Naive thymus-derived CD4-positive, alpha-beta T cell (primary cell): ENCODE measurements at regions of chr19 and their contacts with region 1.

Region 1: DNA sequence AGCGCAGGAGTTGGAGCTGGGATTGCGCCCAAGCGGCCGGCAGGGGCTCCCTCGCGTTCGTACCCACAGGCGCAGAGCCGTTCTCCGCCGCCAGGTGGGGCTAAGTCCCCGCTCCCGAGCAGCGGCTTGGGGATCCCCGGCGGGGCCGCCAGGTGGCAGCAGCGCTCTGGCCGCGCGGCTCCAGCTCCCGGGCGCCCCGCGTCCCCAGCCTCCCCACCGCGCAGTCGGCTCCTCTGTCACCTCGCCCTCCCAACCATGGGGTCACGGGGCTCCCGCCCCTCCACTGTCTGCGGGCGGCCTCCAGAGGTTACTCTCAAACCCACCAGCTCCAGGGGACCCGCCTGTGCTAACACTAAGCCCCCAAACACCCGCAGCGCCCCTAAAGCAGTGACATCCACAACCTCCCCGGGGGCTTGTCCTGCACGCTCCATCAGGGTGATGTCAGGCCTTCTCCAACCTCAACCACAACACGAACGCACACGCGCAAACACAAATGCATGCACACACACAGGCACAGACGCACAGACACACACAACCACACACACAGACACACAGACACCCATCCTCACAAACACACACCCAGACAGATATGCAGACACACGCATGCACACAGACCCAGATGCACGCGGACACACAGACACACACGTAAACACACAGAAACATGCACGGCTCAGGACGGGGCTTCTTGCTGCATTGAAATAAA is 18.4 kb upstream of the KCTD15 start:
- DNase-seq: peak; percentile 60 to 94 (median 84)
- ATAC-seq: peak; percentile 96
- H3K4me3 ChIP-seq: peak overlapping the region; percentile 40
- H3K4me3 Mint-ChIP-seq: peak overlapping the region in 8 of 10 donors; percentile 1 to 71 (median 55)
- H3K27ac ChIP-seq: no peak overlapping the region
- H3K27ac Mint-ChIP-seq: peak overlapping the region in 1 of 9 donors; percentile 22
- H3K4me1 ChIP-seq: peaks cover 0 to 3% of the 10 kb centered on the region in 2 donors
- H3K4me1 Mint-ChIP-seq: peaks cover 5 to 13% (median 10%) of the 10 kb centered on the region in 7 donors
- H3K27me3 ChIP-seq: no peaks in the 10 kb centered on the region
- H3K27me3 Mint-ChIP-seq: peaks cover 14 to 37% (median 27%) of the 10 kb centered on the region in 5 donors

Region 2: GRCh38 chr19:33430674-33431277 is 347.5 kb before region 1 on chr19:
- CTCF ChIA-PET with region 1: interaction called, 3 read pairs
- POLR2A ChIA-PET with region 1: no interaction called
- intact Hi-C with region 1: loop called in 1 of 2 experiments (anchors 2 kb)
- DNase-seq: peak in 7 of 9 donors; percentile 41 to 69 (median 53)
- ATAC-seq: peak; percentile 83
- H3K4me3 ChIP-seq: no peak overlapping the region
- H3K4me3 Mint-ChIP-seq: peak overlapping the region; percentile 1 to 76 (median 50)
- H3K27ac ChIP-seq: peak overlapping the region; percentile 37
- H3K27ac Mint-ChIP-seq: peak overlapping the region in 7 of 9 donors; percentile 65 to 90 (median 80)
- H3K4me1 ChIP-seq: peaks cover 9 to 13% of the 10 kb centered on the region in 2 donors
- H3K4me1 Mint-ChIP-seq: peaks cover 3 to 16% (median 11%) of the 10 kb centered on the region in 7 donors
- H3K27me3 ChIP-seq: no peaks in the 10 kb centered on the region
- H3K27me3 Mint-ChIP-seq: peaks cover 0 to 4% (median 0%) of the 10 kb centered on the region in 5 donors

Region 3: GRCh38 chr19:33603377-33603776 is 174.9 kb before region 1 on chr19:
- CTCF ChIA-PET with region 1: no interaction called
- POLR2A ChIA-PET with region 1: no interaction called
- intact Hi-C with region 1: no loop called
- DNase-seq: no peak
- ATAC-seq: no peak
- H3K4me3 ChIP-seq: no peak overlapping the region
- H3K4me3 Mint-ChIP-seq: no peak overlapping the region
- H3K27ac ChIP-seq: no peak overlapping the region
- H3K27ac Mint-ChIP-seq: no peak overlapping the region
- H3K4me1 ChIP-seq: no peaks in the 10 kb centered on the region
- H3K4me1 Mint-ChIP-seq: no peaks in the 10 kb centered on the region
- H3K27me3 ChIP-seq: no peaks in the 10 kb centered on the region
- H3K27me3 Mint-ChIP-seq: peaks cover 0 to 55% (median 39%) of the 10 kb centered on the region in 5 donors

Region 4: DNA sequence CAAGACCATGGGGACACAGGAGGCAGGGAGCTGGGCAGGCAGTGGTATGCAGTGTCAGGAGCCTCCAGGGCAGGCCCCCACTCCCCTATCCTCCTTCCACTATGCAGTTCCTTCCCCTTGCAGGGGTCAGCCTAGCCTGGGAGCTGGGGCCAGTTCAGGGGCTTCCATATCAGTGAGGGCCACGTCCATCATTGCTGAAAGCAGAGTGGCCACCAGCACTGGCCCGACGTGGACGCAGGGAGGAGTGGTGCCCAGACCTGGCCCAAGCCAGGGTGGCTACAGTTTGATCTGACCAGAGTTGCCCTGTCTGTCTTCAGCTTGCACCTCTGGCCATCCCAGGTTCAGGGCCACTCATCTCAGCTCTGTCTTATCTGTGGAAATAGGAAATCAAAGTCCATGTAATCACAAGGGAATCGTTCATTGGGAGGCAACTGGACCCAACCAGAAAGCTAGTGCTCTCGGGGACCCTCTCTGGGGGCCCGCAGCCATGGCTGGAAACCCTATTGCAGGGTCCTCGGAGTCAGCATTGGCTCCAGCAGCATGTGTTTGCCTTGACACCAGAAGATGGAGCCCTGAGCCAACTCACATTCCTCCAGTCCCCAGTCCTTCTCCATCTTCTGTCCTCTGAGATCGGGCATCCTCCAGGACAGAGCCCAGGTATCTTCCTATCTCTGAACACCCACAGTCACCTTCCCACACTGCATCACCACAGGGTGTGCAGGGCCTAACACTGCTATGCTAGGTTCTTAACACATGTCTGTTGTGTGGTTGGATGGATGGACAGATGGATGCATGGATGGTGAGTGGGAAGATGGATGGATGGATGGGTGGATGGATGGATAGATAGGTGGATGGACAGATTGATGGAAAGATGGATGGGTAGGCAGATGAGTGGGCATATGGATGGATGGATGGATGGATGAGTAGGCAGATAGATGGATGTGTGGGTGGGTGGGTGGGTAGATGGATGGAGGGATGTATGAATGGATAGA is 57.3 kb before region 1 on chr19:
- CTCF ChIA-PET with region 1: no interaction called
- POLR2A ChIA-PET with region 1: no interaction called
- intact Hi-C with region 1: no loop called
- DNase-seq: no peak
- ATAC-seq: peak; percentile 12
- H3K4me3 ChIP-seq: no peak overlapping the region
- H3K4me3 Mint-ChIP-seq: no peak overlapping the region
- H3K27ac ChIP-seq: no peak overlapping the region
- H3K27ac Mint-ChIP-seq: no peak overlapping the region
- H3K4me1 ChIP-seq: no peaks in the 10 kb centered on the region
- H3K4me1 Mint-ChIP-seq: peaks cover 0 to 2% (median 0%) of the 10 kb centered on the region in 7 donors
- H3K27me3 ChIP-seq: no peaks in the 10 kb centered on the region
- H3K27me3 Mint-ChIP-seq: peaks cover 0 to 54% (median 20%) of the 10 kb centered on the region in 5 donors

Region 5: GRCh38 chr19:33828266-33829075 is 50.2 kb after region 1 on chr19:
- CTCF ChIA-PET with region 1: no interaction called
- POLR2A ChIA-PET with region 1: no interaction called
- intact Hi-C with region 1: no loop called
- DNase-seq: no peak
- ATAC-seq: no peak
- H3K4me3 ChIP-seq: no peak overlapping the region
- H3K4me3 Mint-ChIP-seq: no peak overlapping the region
- H3K27ac ChIP-seq: no peak overlapping the region
- H3K27ac Mint-ChIP-seq: peak overlapping the region in 1 of 9 donors; percentile 52
- H3K4me1 ChIP-seq: no peaks in the 10 kb centered on the region
- H3K4me1 Mint-ChIP-seq: no peaks in the 10 kb centered on the region
- H3K27me3 ChIP-seq: no peaks in the 10 kb centered on the region
- H3K27me3 Mint-ChIP-seq: peaks cover 3 to 32% (median 27%) of the 10 kb centered on the region in 5 donors

Region 6: DNA sequence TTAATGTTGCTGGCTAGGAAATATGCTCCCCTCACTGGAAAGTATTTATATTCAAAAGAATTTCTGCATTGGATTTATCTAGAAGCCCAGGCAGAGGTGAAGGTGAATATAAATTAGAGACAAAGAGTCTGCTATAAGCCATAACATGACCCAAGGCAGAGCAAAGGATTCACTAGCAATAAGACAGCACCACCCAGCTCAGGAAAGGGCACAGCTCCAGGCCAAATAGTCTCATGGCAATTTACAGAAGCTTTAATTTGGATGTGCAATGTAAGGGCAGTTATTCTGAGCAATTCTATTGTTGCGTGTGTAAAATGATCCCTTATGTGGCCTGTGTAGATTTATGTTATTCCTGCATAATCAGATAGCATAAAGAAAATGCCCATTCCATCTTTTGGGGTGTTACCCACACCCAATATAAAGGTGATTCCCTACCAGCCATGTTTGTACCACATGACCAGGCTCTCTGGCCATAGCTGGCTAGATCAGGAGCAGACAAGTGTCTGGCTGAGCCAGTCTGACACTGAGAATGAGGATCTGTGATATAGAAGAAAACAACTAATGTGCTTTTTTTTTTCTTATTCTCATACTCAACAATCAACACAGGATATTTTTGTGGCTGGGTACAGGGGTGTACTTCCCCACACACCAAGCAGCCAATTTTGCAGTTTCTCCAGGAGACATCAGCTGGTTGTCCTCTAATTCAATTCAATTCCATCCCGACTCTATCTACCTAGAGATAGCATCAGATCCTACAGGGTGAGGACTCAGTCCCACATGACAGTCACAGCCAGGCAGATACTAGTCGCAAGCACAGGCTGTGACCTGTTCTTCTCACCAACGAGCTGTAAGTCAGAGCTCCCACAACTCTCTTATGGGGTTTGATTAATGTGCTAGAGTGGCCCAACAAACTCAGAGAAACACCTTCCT is 199.8 kb after region 1 on chr19:
- CTCF ChIA-PET with region 1: no interaction called
- POLR2A ChIA-PET with region 1: no interaction called
- intact Hi-C with region 1: no loop called
- DNase-seq: no peak
- ATAC-seq: no peak
- H3K4me3 ChIP-seq: no peak overlapping the region
- H3K4me3 Mint-ChIP-seq: no peak overlapping the region
- H3K27ac ChIP-seq: no peak overlapping the region
- H3K27ac Mint-ChIP-seq: no peak overlapping the region
- H3K4me1 ChIP-seq: no peaks in the 10 kb centered on the region
- H3K4me1 Mint-ChIP-seq: no peaks in the 10 kb centered on the region
- H3K27me3 ChIP-seq: no peaks in the 10 kb centered on the region
- H3K27me3 Mint-ChIP-seq: peaks cover 3 to 67% (median 58%) of the 10 kb centered on the region in 5 donors

Region 7: DNA sequence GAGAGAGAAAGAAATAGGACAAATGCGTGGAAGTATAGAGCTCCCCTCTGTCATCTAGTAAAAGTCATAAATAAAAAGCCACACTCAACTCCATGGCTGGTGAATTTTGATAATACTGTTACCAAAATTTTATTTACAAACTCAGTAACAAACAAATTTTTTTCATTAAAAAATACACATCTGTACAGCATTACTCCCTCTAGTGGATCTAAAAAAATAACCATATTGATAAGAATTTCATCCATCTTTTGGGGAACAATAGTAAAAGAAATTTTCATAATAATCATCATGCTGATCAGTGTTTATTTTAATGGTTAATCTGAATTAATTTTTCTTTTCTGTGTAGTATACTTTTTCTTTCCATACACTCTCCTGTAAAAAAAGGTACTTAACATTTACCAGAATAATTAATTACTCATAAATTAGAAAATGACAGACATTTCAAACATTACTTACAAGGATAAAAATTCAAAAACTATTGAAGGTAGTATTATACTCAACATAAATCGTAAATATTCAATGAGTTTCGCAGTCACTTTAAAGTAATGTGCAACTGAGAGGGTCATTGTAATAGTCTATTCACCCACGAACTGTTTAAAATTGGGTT is 220.6 kb after region 1 on chr19:
- CTCF ChIA-PET with region 1: no interaction called
- POLR2A ChIA-PET with region 1: no interaction called
- intact Hi-C with region 1: loop called (anchors 1 to 2 kb)
- DNase-seq: no peak
- ATAC-seq: no peak
- H3K4me3 ChIP-seq: no peak overlapping the region
- H3K4me3 Mint-ChIP-seq: no peak overlapping the region
- H3K27ac ChIP-seq: no peak overlapping the region
- H3K27ac Mint-ChIP-seq: no peak overlapping the region
- H3K4me1 ChIP-seq: no peaks in the 10 kb centered on the region
- H3K4me1 Mint-ChIP-seq: no peaks in the 10 kb centered on the region
- H3K27me3 ChIP-seq: peaks cover 0 to 5% of the 10 kb centered on the region in 2 donors
- H3K27me3 Mint-ChIP-seq: peaks cover 13 to 34% (median 28%) of the 10 kb centered on the region in 5 donors

Region 8: DNA sequence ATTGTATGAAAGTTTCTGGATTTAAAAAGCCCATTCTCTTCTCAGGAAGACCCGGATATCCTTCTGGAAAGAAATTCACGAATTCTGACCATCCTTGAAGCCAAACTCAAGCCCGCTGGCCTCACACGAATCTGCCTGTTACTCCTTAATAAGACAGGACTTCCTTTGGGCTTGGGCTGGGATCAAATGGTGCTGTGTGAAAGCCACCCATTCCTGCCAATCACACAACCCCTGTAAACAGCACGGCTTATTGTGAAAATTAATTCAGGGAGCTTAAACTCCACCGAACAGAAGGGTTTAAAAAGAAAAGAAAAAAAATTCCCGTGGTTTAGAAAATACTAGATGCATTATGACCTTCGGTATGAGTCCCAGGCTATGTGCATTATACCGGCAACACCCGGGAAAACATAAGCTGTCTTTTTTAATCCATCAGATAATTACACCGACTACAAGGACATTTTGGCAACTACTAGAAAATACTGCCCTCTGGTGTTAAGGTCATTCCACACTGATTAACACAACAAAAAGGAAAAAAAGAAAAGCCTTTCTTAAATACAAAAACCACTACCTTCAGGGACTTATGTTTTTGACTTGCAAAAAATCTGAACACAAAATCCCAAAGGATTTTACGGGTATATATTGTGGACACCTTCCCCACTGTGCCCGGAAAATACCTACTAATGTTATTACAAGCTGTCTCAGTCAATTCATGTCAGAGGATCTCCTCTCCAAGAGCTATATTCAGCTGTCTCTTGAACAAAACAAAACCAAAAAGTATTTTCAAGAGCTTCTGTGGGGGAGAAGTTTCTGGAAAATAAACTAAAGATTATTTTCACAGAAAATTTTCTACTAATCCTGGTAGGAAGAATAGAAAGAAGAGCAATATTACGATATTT is 318.0 kb after region 1 on chr19:
- CTCF ChIA-PET with region 1: interaction called, 12 read pairs
- POLR2A ChIA-PET with region 1: no interaction called
- intact Hi-C with region 1: loop called (anchors 1 kb)
- DNase-seq: peak in 5 of 9 donors; percentile 7 to 36 (median 25)
- ATAC-seq: peak; percentile 53
- H3K4me3 ChIP-seq: no peak overlapping the region
- H3K4me3 Mint-ChIP-seq: peak overlapping the region in 2 of 10 donors; percentile 49 to 56
- H3K27ac ChIP-seq: no peak overlapping the region
- H3K27ac Mint-ChIP-seq: peak overlapping the region in 1 of 9 donors; percentile 33
- H3K4me1 ChIP-seq: no peaks in the 10 kb centered on the region
- H3K4me1 Mint-ChIP-seq: peaks cover 0 to 5% (median 0%) of the 10 kb centered on the region in 7 donors
- H3K27me3 ChIP-seq: no peaks in the 10 kb centered on the region
- H3K27me3 Mint-ChIP-seq: peaks cover 5 to 27% (median 9%) of the 10 kb centered on the region in 5 donors

Region 9: DNA sequence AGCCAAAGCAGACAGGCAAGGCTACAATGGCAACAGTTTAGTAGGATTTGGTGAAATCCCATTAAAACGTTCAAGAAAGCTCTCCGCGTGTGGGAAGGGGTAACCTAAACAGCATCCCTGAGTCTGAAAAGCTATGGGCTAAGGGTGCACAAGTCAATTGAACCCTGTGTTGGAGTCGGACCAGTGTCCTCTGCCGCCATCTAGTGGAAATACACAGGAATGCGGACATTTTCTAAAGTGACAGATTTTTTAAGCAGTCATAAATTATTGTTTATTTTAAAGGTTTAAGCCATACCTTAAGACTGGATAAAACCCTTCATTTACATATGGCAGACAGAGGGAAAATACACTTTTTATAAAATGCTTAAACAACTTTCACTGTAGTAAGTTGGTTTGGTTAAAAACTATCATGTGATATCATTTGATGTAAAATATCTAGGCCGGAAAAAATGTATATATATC is 367.5 kb after region 1 on chr19:
- CTCF ChIA-PET with region 1: interaction called, 7 read pairs
- POLR2A ChIA-PET with region 1: no interaction called
- intact Hi-C with region 1: loop called in 1 of 2 experiments (anchors 2 kb)
- DNase-seq: peak; percentile 11 to 68 (median 60)
- ATAC-seq: peak; percentile 85
- H3K4me3 ChIP-seq: no peak overlapping the region
- H3K4me3 Mint-ChIP-seq: no peak overlapping the region
- H3K27ac ChIP-seq: no peak overlapping the region
- H3K27ac Mint-ChIP-seq: no peak overlapping the region
- H3K4me1 ChIP-seq: no peaks in the 10 kb centered on the region
- H3K4me1 Mint-ChIP-seq: peaks cover 0 to 4% (median 0%) of the 10 kb centered on the region in 7 donors
- H3K27me3 ChIP-seq: no peaks in the 10 kb centered on the region
- H3K27me3 Mint-ChIP-seq: peaks cover 0 to 2% (median 0%) of the 10 kb centered on the region in 5 donors